Activated CD4-positive, alpha-beta T cell treated with anti-CD3 and anti-CD28 coated beads, Interleukin-2, amount 10 ng/mL, durations not matched to agents 24 days and 14 days (primary cell): ENCODE measurements at regions of chr3 and their contacts with region 1.

Region 1: DNA sequence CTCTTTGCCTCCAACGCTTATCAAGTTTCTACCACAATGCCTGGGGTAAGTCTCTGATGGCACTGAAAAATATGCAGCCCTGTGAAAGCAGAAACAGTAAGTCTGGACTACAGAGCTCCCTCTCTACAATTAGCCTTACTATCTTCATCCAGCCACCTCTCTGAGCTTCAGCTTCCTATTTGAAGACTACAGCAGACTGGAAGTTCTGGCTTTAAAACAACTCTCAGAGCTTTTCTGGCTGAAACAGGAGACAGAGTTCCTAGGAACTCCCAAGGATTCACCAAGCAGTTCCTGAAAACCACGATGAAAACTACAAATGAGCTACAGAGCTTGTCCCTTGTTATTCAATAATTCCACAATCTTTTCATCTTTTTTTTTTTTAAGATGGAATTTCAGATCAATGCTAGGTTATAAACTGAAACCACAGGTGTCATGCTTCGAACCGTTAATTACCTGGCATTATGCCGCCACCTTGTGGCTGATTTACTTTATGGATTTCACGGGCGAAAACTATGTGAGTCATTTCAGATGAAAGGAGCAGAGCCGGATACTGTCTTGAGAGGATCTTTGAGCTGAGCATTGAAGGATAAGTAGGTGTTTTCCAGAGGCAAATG is 3.9 kb downstream of the CRYGS start:
- DNase-seq: peak; percentile 95
- H3K4me3 Mint-ChIP-seq: peak overlapping the region; percentile 28
- H3K27ac Mint-ChIP-seq: peak overlapping the region; percentile 21
- H3K4me1 Mint-ChIP-seq: peaks cover 31% of the 10 kb centered on the region
- H3K27me3 Mint-ChIP-seq: no peaks in the 10 kb centered on the region

Region 2: GRCh38 chr3:185878920-185879319 is 661.4 kb before region 1 on chr3:
- intact Hi-C with region 1: no loop called
- DNase-seq: no peak
- H3K4me3 Mint-ChIP-seq: no peak overlapping the region
- H3K27ac Mint-ChIP-seq: no peak overlapping the region
- H3K4me1 Mint-ChIP-seq: no peaks in the 10 kb centered on the region
- H3K27me3 Mint-ChIP-seq: peaks cover 6% of the 10 kb centered on the region

Region 3: GRCh38 chr3:185983495-185984141 is 556.7 kb before region 1 on chr3:
- intact Hi-C with region 1: loop called (anchors 1 kb)
- DNase-seq: peak; percentile 88
- H3K4me3 Mint-ChIP-seq: no peak overlapping the region
- H3K27ac Mint-ChIP-seq: no peak overlapping the region
- H3K4me1 Mint-ChIP-seq: peaks cover 4% of the 10 kb centered on the region
- H3K27me3 Mint-ChIP-seq: peaks cover 35% of the 10 kb centered on the region

Region 4: DNA sequence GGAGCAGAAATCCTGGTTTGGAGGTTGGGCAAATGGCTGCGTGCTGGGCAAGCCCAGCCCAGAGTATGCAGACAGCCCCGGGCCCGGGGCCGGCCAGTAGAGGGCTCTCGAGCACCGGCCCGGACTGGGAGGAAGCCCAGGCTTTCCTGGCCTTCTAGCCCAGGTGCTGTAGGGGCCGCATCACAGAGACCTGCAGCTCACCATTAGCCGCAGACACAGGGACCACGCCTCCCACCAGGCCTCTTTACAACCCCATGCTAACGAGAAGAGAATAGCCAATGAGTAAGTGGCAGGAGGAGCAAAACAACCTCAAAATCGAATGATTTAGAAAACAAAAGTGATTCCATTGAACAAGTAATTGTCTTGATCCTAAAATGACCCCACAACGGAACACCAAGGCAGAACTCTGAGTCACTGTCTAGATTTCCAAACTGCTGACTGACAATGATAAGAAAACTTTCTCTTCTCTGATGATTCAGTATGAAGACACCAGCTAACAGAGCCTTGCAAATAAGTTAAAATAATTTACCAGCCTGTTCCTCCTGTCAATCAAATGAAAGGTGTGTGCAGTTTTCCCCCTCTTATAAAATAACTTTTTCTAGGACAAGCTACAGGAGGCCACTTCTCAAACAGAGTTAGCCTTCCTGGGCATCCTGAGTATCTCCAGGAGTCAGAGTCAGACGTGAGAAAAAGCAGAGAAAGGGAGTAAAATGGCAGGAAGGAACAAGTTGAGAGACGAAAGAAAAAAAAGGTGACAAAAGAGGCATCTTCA is 280.5 kb before region 1 on chr3:
- intact Hi-C with region 1: loop called (anchors 1 kb)
- DNase-seq: peak; percentile 86
- H3K4me3 Mint-ChIP-seq: peak overlapping the region; percentile 46
- H3K27ac Mint-ChIP-seq: peak overlapping the region; percentile 76
- H3K4me1 Mint-ChIP-seq: peaks cover 20% of the 10 kb centered on the region
- H3K27me3 Mint-ChIP-seq: peaks cover 5% of the 10 kb centered on the region

Region 5: DNA sequence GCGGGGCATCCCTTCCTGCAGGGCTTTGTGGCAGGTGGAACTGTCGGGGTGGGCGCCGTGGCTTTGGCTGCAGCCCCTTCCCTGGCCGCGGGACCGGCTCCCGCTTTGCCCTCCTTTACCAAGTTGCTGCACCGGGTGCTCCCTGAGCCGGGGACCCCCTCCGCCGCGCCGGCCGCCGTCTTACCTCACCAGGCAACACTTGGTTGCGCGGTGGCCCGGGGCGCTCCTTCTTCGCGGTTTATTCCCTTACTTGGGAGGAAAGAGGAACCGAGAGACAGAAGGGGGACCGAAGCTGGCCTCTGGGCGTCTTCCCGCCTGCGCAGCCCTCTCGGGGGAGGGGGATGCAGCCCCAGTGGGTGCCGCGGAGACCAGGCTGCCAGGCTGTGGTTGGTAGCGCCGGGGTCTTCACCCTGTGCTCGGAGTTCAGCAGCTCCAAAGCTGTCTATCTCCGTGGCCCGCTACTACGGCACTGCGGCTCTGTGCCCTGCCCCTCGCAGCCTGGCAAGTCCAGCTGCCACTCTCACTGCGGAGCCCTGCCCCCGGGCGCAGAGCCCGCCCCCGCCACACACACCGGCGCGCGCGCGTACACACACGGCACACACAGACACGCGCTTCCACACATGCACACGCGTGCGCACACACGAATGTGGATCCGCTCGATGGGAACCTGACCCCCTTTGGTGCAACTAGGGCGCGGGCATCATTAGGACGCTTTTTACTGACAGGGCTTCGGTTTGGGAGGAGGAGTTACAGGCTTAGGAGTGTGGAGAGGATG is 178.4 kb before region 1 on chr3 and contains the start of gene DGKG:
- intact Hi-C with region 1: loop called (anchors 2 kb)
- DNase-seq: peak; percentile 60
- H3K4me3 Mint-ChIP-seq: peak within 1 kb of the TSS; percentile 46
- H3K27ac Mint-ChIP-seq: no peak within 1 kb of the TSS
- H3K4me1 Mint-ChIP-seq: peaks cover 3% of the 10 kb centered on the region
- H3K27me3 Mint-ChIP-seq: peaks cover 56% of the 10 kb centered on the region
- total RNA-seq, gene DGKG: 0.14 and 0.28 TPM in 2 replicates